ENCODE measurements at regions of chr12 and their contacts with region 1.

Region 1: GRCh38 chr12:67758119-67758518 is 109.6 kb downstream of the DYRK2 start:
- DNase-seq: no peak
- H3K4me3 Mint-ChIP-seq: no peak overlapping the region
- H3K27ac Mint-ChIP-seq: no peak overlapping the region
- H3K4me1 Mint-ChIP-seq: peaks cover 39% of the 10 kb centered on the region
- H3K27me3 Mint-ChIP-seq: no peaks in the 10 kb centered on the region

Region 2: DNA sequence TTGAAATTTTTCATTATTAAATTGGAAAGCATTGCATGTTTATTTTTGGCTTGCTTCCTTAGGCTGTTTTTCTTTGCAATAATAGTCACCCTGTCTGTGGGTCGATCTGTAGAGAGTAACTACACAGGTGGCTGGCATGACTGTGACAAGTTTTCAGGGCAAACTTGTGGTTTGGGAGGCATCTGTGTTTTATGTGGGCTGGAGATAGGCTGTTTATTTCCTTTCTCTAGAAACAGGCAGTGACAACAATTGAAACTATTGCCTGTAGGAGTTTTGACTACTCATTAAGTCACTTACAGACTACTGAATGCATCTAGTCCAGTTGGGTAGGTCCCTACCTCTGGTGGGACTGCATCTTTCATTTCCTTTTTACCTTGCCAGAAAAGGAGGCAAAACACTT is 46.0 kb after region 1 on chr12:
- CTCF ChIA-PET with region 1: no interaction called
- POLR2A ChIA-PET with region 1: no interaction called
- intact Hi-C with region 1: loop called (anchors 1 kb)
- DNase-seq: peak; percentile 80
- H3K4me3 Mint-ChIP-seq: no peak overlapping the region
- H3K27ac Mint-ChIP-seq: no peak overlapping the region
- H3K4me1 Mint-ChIP-seq: peaks cover 31% of the 10 kb centered on the region
- H3K27me3 Mint-ChIP-seq: no peaks in the 10 kb centered on the region